ENCODE measurements at regions of chr1 and their contacts with region 1.

Region 1: GRCh38 chr1:156813750-156814570 is 2.7 kb downstream of the SH2D2A start:
- DNase-seq: no peak
- ATAC-seq: peak; percentile 69
- H3K4me3 ChIP-seq: peak overlapping the region; percentile 59; the same call in 1 of the 2 replicates
- H3K27ac ChIP-seq: no peak overlapping the region
- H3K4me1 ChIP-seq: peaks cover 20% of the 10 kb centered on the region
- H3K27me3 ChIP-seq: no peaks in the 10 kb centered on the region
- CTCF ChIP-seq: peak; percentile 57 to 80 (median 57)
- EP300 ChIP-seq: no peak
- POLR2A ChIP-seq: peak; percentile 68
- RAD21 ChIP-seq: no peak

Region 2: DNA sequence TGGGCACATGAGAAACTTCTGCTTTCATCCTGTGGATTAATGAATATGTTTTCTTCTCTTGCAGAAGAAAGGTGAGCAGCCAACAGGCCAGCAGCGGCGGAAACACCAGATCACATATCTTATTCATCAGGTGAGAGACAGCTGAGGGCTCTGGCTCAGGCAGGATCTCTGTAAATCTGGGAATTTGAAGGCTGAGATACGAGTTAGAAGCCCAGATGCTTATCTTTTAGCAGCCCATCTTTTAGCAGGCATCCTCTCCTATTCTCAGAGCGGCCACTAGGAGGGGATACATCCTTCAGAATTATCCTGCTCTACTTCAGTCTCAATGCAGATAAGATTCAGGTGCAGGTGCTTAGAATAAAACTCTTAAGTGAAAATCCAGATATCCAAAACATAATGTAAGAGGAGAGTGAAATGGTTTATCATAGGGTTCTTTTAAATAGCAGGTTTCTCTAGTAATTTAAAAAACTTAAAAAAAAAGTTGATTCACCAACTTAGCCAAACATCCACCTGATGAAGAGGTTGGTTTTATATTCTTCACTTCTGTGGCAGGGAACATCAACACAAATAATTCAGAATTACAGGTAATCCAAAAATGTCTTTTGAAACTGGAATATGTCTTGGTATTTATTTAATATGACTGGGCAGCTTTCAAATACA is 16.6 kb before region 1 on chr1:
- CTCF ChIA-PET with region 1: interaction called, 60 read pairs
- POLR2A ChIA-PET with region 1: no interaction called
- RAD21 ChIA-PET with region 1: no interaction called
- SMC1A ChIA-PET with region 1: interaction called, 3 read pairs
- in situ Hi-C with region 1: no loop called
- intact Hi-C with region 1: no loop called
- DNase-seq: no peak
- ATAC-seq: peak; percentile 94
- H3K4me3 ChIP-seq: no peak overlapping the region
- H3K27ac ChIP-seq: no peak overlapping the region
- H3K4me1 ChIP-seq: peaks cover 17% of the 10 kb centered on the region
- H3K27me3 ChIP-seq: no peaks in the 10 kb centered on the region
- CTCF ChIP-seq: peak; percentile 78 to 88 (median 82)
- EP300 ChIP-seq: no peak
- POLR2A ChIP-seq: no peak
- RAD21 ChIP-seq: peak; percentile 84

Region 3: DNA sequence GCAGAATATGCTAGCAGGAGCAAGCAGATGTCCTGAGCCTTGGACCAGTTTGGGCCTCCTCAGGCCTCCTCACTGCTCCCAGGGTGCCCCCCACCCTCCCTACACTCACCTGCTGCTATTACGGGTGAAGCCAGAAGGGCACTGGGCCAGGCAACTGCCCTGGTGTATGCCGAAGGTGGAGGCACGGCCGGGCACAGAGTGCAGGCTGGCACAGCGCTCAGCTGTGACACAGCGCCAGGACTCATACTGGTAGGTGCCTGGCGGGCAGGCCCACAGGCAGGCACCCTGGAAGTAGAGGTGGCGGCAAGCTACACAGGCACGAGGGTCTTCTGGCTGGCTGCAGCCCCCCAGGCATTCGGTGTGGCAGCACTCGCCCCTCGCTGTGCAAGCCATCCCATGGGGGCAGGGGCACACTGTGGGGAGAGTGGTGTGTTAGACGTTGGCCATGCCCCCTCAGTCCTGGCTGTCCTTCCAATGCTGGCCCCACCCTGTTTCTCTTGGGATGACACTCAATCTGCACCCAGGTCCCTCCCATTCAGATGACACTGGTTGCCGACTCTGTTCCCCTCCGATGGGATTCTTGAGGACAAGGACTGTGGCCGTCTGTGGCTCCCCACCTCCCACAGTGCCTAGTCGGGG is 37.9 kb after region 1 on chr1:
- CTCF ChIA-PET with region 1: no interaction called
- POLR2A ChIA-PET with region 1: no interaction called
- RAD21 ChIA-PET with region 1: no interaction called
- SMC1A ChIA-PET with region 1: no interaction called
- in situ Hi-C with region 1: no loop called
- intact Hi-C with region 1: no loop called
- DNase-seq: no peak
- ATAC-seq: no peak
- H3K4me3 ChIP-seq: no peak overlapping the region
- H3K27ac ChIP-seq: no peak overlapping the region
- H3K4me1 ChIP-seq: no peaks in the 10 kb centered on the region
- H3K27me3 ChIP-seq: peaks cover 4 to 5% of the 10 kb centered on the region in 2 experiments; a peak in 2 of 4 replicates
- CTCF ChIP-seq: no peak
- EP300 ChIP-seq: no peak
- POLR2A ChIP-seq: no peak
- RAD21 ChIP-seq: no peak

Region 4: GRCh38 chr1:157000686-157001085 is 186.7 kb after region 1 on chr1:
- CTCF ChIA-PET with region 1: no interaction called
- POLR2A ChIA-PET with region 1: no interaction called
- RAD21 ChIA-PET with region 1: no interaction called
- SMC1A ChIA-PET with region 1: no interaction called
- in situ Hi-C with region 1: no loop called
- intact Hi-C with region 1: no loop called
- DNase-seq: no peak
- ATAC-seq: no peak
- H3K4me3 ChIP-seq: no peak overlapping the region
- H3K27ac ChIP-seq: no peak overlapping the region
- H3K4me1 ChIP-seq: no peaks in the 10 kb centered on the region
- H3K27me3 ChIP-seq: no peaks in the 10 kb centered on the region
- CTCF ChIP-seq: no peak
- EP300 ChIP-seq: no peak
- POLR2A ChIP-seq: no peak
- RAD21 ChIP-seq: no peak

Measured in GM12878 (cell line).